CD4-positive, alpha-beta T cell (primary cell): ENCODE measurements at regions of chr12 and their contacts with region 1.

Region 1: DNA sequence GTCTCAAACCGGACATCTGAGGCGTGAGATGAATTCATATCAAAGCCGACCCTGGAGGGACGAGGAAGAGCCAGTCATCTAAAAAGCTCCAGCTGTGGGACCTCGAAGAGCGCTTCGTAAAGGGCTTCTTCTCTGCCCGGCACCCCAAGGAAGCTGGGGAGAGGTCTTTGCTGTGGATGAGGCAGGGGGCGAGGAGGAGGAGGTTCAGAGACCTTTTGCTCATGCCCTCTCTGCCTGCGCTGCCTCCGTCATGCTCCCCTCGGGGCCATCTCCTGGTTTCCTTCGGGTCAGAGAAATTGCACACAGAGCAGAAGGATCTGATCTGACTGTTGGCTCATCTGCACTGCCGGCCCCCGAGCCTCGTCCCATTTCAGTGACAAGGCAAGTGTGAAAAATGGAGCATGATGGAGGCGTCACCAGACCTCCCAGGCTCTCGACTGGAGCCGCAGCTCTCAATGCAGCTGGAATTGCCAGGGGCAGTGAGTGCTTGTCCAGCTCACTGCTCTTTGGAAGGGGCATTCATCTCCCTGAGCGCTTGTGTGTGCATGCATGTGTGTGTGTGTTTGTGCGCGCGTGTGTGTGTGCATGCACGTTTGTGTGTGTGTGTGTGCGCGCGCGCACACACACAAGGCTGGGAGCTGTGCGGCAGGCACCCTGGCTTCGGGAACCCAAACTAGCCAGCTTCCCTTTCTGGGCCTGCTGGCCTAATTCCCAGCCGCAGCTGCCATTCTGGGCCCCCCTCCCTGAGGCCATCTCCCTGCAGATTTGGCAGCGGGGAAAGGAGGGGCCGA is 9.2 kb downstream of the CABP1 start:
- DNase-seq: peak in 1 of 14 experiments; percentile 31
- ATAC-seq: no peak
- H3K4me3 ChIP-seq: no peak overlapping the region
- H3K4me3 Mint-ChIP-seq: no peak overlapping the region
- H3K27ac ChIP-seq: no peak overlapping the region
- H3K27ac Mint-ChIP-seq: no peak overlapping the region
- H3K4me1 ChIP-seq: peaks cover 14% of the 10 kb centered on the region
- H3K4me1 Mint-ChIP-seq: peaks cover 11% of the 10 kb centered on the region
- H3K27me3 ChIP-seq: peaks cover 24 to 58% of the 10 kb centered on the region in 2 experiments
- H3K27me3 Mint-ChIP-seq: peaks cover 76% of the 10 kb centered on the region
- CTCF ChIP-seq: peak; percentile 54

Region 2: DNA sequence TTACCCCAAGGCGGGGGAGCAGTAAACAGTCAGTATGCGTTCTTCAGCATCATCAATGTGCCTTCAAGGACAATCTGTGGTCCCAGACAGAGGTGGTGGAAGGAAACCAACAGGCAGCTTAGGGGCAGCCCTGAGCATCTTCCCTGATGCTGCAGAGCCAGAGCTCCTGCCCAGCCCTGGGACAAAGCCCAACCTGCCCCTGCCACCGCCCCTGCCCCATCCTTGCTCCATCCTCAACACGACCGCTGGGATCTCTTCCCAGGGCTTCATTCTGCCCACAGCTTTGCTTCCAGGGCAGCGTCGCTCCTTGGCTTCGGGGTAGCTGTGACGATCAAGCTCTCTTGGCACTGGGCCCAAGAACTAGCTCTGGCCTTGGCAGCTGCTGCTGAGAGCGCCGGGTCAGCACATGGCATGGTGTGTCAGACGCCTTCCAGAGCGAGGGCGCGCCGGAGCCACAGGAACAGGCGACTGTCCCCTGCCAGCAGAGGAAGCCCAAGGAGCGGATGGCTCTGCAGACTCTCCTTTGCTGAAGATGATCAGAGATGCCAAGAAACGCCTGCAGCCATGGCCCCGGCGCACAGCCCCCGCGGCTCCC is 549.1 kb before region 1 on chr12:
- CTCF ChIA-PET with region 1: no interaction called
- POLR2A ChIA-PET with region 1: no interaction called
- intact Hi-C with region 1: no loop called
- DNase-seq: no peak
- ATAC-seq: no peak
- H3K4me3 ChIP-seq: no peak overlapping the region
- H3K4me3 Mint-ChIP-seq: no peak overlapping the region
- H3K27ac ChIP-seq: no peak overlapping the region
- H3K27ac Mint-ChIP-seq: peak overlapping the region; percentile 20
- H3K4me1 ChIP-seq: peaks cover 38% of the 10 kb centered on the region
- H3K4me1 Mint-ChIP-seq: peaks cover 11% of the 10 kb centered on the region
- H3K27me3 ChIP-seq: no peaks in the 10 kb centered on the region
- H3K27me3 Mint-ChIP-seq: no peaks in the 10 kb centered on the region
- CTCF ChIP-seq: no peak

Region 3: GRCh38 chr12:120356567-120357030 is 293.0 kb before region 1 on chr12:
- CTCF ChIA-PET with region 1: no interaction called
- POLR2A ChIA-PET with region 1: no interaction called
- intact Hi-C with region 1: loop called in 1 of 2 experiments (anchors 5 kb)
- DNase-seq: peak; percentile 56 to 81 (median 65)
- ATAC-seq: peak; percentile 88
- H3K4me3 ChIP-seq: no peak overlapping the region
- H3K4me3 Mint-ChIP-seq: no peak overlapping the region
- H3K27ac ChIP-seq: no peak overlapping the region
- H3K27ac Mint-ChIP-seq: no peak overlapping the region
- H3K4me1 ChIP-seq: peaks cover 5% of the 10 kb centered on the region
- H3K4me1 Mint-ChIP-seq: no peaks in the 10 kb centered on the region
- H3K27me3 ChIP-seq: peaks cover 18 to 28% of the 10 kb centered on the region in 2 experiments
- H3K27me3 Mint-ChIP-seq: peaks cover 54% of the 10 kb centered on the region
- CTCF ChIP-seq: peak; percentile 91

Region 4: GRCh38 chr12:120580787-120581723 is 68.6 kb before region 1 on chr12 and contains the start of gene POP5:
- CTCF ChIA-PET with region 1: interaction called, 16 read pairs
- POLR2A ChIA-PET with region 1: interaction called, 3 read pairs
- intact Hi-C with region 1: loop called (anchors 1 to 2 kb)
- DNase-seq: peak; percentile 80 to 97 (median 90)
- ATAC-seq: peak; percentile 90
- H3K4me3 ChIP-seq: peak within 1 kb of the TSS; percentile 92
- H3K4me3 Mint-ChIP-seq: peak within 1 kb of the TSS; percentile 97
- H3K27ac ChIP-seq: peak within 1 kb of the TSS; percentile 66 to 69
- H3K27ac Mint-ChIP-seq: peak within 1 kb of the TSS; percentile 85
- H3K4me1 ChIP-seq: peaks cover 32% of the 10 kb centered on the region
- H3K4me1 Mint-ChIP-seq: peaks cover 45% of the 10 kb centered on the region
- H3K27me3 ChIP-seq: no peaks in the 10 kb centered on the region
- H3K27me3 Mint-ChIP-seq: peaks cover 21% of the 10 kb centered on the region
- CTCF ChIP-seq: no peak
- total RNA-seq, gene POP5: 17.9 to 22.0 TPM

Region 5: GRCh38 chr12:120686690-120687577 is 37.3 kb after region 1 on chr12 and contains the start of gene MLEC:
- CTCF ChIA-PET with region 1: interaction called, 8 read pairs
- POLR2A ChIA-PET with region 1: no interaction called
- intact Hi-C with region 1: loop called in 1 of 2 experiments (anchors 1 kb)
- DNase-seq: peak; percentile 98 to 99 (median 99)
- ATAC-seq: peak; percentile 82
- H3K4me3 ChIP-seq: peak within 1 kb of the TSS; percentile 95
- H3K4me3 Mint-ChIP-seq: peak within 1 kb of the TSS; percentile 93
- H3K27ac ChIP-seq: peak within 1 kb of the TSS; percentile 75 to 96
- H3K27ac Mint-ChIP-seq: peak within 1 kb of the TSS; percentile 89
- H3K4me1 ChIP-seq: peaks cover 33% of the 10 kb centered on the region
- H3K4me1 Mint-ChIP-seq: peaks cover 50% of the 10 kb centered on the region
- H3K27me3 ChIP-seq: no peaks in the 10 kb centered on the region
- H3K27me3 Mint-ChIP-seq: no peaks in the 10 kb centered on the region
- CTCF ChIP-seq: no peak
- total RNA-seq, gene MLEC: 20.7 to 22.1 TPM

Region 6: GRCh38 chr12:120909633-120910298 is 260.1 kb after region 1 on chr12:
- CTCF ChIA-PET with region 1: no interaction called
- POLR2A ChIA-PET with region 1: no interaction called
- intact Hi-C with region 1: loop called in 1 of 2 experiments (anchors 5 kb)
- DNase-seq: no peak
- ATAC-seq: no peak
- H3K4me3 ChIP-seq: no peak overlapping the region
- H3K4me3 Mint-ChIP-seq: no peak overlapping the region
- H3K27ac ChIP-seq: no peak overlapping the region
- H3K27ac Mint-ChIP-seq: no peak overlapping the region
- H3K4me1 ChIP-seq: peaks cover 4% of the 10 kb centered on the region
- H3K4me1 Mint-ChIP-seq: peaks cover 2% of the 10 kb centered on the region
- H3K27me3 ChIP-seq: no peaks in the 10 kb centered on the region
- H3K27me3 Mint-ChIP-seq: no peaks in the 10 kb centered on the region
- CTCF ChIP-seq: no peak

Region 7: DNA sequence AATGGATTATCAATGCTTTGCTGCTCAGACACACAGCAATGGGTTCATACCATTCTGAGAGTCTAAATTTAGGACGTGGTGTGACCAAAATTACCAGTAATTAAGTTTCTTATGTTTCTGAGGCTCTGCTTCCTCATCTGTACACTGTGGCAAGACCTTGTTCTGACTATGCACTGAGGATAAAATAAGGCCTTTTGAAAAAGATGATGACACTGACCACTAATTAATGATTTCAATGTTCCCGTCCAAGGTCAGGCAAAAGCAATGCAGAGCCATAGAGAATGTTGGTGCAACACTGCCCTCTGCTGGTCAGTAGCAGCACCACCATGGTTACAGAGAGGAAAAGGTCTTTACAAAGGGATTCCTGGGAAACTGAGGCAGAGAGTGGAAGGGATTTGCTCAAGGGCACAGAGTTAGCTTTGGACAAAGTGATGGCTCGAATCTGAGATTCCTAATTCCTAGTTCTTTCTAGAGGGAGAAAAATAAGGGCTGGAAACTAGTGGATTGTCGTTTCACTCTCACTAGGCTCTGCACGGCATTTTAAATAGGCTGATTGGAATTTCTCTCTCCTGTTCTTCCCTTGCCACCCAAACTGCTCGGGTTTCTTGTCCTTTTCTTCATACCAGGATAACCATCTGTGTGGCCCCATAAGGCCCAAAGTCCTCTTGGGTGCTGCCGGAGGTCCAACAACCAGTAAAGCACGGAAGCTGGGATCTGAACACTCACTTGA is 460.7 kb after region 1 on chr12:
- CTCF ChIA-PET with region 1: interaction called, 3 read pairs
- POLR2A ChIA-PET with region 1: no interaction called
- intact Hi-C with region 1: loop called (anchors 1 to 2 kb)
- DNase-seq: peak; percentile 33 to 87 (median 58)
- ATAC-seq: peak; percentile 82
- H3K4me3 ChIP-seq: no peak overlapping the region
- H3K4me3 Mint-ChIP-seq: no peak overlapping the region
- H3K27ac ChIP-seq: no peak overlapping the region
- H3K27ac Mint-ChIP-seq: no peak overlapping the region
- H3K4me1 ChIP-seq: no peaks in the 10 kb centered on the region
- H3K4me1 Mint-ChIP-seq: no peaks in the 10 kb centered on the region
- H3K27me3 ChIP-seq: no peaks in the 10 kb centered on the region
- H3K27me3 Mint-ChIP-seq: no peaks in the 10 kb centered on the region
- CTCF ChIP-seq: peak; percentile 99

Region 8: DNA sequence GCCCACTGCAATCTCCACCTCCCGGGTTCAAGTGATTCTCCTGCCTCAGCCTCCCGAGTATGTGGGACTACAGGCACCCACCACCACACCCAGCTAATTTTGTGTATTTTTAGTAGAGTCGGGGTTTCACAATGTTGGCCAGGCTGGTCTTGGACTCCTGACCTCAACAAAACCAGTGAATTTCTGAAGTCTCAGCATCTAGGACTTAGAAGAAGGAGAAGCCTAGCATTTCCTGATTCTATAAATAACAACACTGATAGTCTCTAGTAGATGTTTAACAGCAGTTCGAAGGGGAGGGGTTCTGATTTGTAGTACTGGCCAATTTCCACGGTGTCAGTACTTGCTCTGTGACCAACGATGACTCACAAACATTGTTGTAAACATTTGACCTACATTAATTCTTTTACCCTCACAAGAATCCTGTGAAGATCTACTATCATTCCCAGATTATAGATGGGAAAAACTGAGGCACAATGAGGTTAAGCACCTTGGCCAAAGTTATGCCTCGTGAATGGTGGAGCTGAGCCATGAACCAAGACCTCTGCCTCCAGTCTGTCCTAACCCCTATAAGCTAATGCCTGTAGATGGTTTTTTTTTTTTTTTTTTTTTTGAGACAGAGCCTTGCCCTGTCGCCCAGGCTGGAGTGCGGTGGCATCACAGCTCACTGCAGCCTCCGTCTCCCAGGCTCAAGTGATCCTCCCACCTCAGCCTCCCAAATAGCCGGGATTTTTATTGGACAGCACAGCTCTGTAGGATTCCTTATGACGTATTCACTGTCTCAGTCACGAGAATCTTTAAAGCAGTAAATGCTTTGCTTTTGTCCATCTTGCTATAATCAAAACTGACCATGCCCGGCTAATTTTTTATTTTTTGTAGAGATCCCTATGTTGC is 565.5 kb after region 1 on chr12:
- CTCF ChIA-PET with region 1: no interaction called
- POLR2A ChIA-PET with region 1: no interaction called
- intact Hi-C with region 1: no loop called
- DNase-seq: peak in 3 of 14 experiments; percentile 36 to 65 (median 60)
- ATAC-seq: no peak
- H3K4me3 ChIP-seq: no peak overlapping the region
- H3K4me3 Mint-ChIP-seq: no peak overlapping the region
- H3K27ac ChIP-seq: peak overlapping the region; percentile 9 to 35
- H3K27ac Mint-ChIP-seq: peak overlapping the region; percentile 73
- H3K4me1 ChIP-seq: peaks cover 41% of the 10 kb centered on the region
- H3K4me1 Mint-ChIP-seq: peaks cover 26% of the 10 kb centered on the region
- H3K27me3 ChIP-seq: no peaks in the 10 kb centered on the region
- H3K27me3 Mint-ChIP-seq: no peaks in the 10 kb centered on the region
- CTCF ChIP-seq: no peak